ENCODE measurements at regions of chrX and their contacts with region 1.

Region 1: DNA sequence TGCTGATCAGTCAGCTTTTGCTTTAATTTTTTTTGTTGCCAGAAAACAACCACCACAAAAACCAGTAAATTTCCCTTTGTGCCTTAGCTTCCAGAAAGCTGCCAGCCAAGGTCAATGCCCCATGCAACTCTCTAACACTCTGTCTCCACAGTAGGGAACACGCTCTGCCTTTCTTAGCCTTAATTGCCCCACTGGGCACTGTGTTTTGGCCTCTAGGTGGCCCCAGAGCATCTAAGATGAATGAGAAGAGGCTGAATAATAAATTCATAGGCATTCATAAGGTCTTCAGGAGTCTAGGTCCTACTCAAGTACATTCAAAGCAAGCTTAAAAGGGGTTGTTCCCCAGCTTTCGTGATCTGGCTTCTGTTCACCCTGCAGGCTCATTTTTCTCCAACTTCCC is 57.7 kb upstream of the PASD1 start:
- DNase-seq: no peak
- ATAC-seq: peak; percentile 80
- H3K4me3 ChIP-seq: no peak overlapping the region
- H3K27ac ChIP-seq: no peak overlapping the region
- H3K4me1 ChIP-seq: no peaks in the 10 kb centered on the region
- H3K27me3 ChIP-seq: no peaks in the 10 kb centered on the region
- CTCF ChIP-seq: peak; percentile 74

Region 2: GRCh38 chrX:151523351-151523750 is 17.6 kb after region 1 on chrX:
- CTCF ChIA-PET with region 1: no interaction called
- POLR2A ChIA-PET with region 1: no interaction called
- in situ Hi-C with region 1: no loop called
- intact Hi-C with region 1: no loop called
- DNase-seq: no peak
- ATAC-seq: no peak
- H3K4me3 ChIP-seq: no peak overlapping the region
- H3K27ac ChIP-seq: no peak overlapping the region
- H3K4me1 ChIP-seq: no peaks in the 10 kb centered on the region
- H3K27me3 ChIP-seq: peaks cover 14% of the 10 kb centered on the region
- CTCF ChIP-seq: no peak

Region 3: GRCh38 chrX:151680805-151681204 is 175.0 kb after region 1 on chrX:
- CTCF ChIA-PET with region 1: no interaction called
- POLR2A ChIA-PET with region 1: no interaction called
- in situ Hi-C with region 1: no loop called
- intact Hi-C with region 1: loop called (anchors 2 kb)
- DNase-seq: peak; percentile 30
- ATAC-seq: peak; percentile 96
- H3K4me3 ChIP-seq: no peak overlapping the region
- H3K27ac ChIP-seq: no peak overlapping the region
- H3K4me1 ChIP-seq: no peaks in the 10 kb centered on the region
- H3K27me3 ChIP-seq: no peaks in the 10 kb centered on the region; the same call in 1 of the 2 replicates
- CTCF ChIP-seq: peak; percentile 75